ENCODE measurements at regions of chr6 and their contacts with region 1.

Region 1: DNA sequence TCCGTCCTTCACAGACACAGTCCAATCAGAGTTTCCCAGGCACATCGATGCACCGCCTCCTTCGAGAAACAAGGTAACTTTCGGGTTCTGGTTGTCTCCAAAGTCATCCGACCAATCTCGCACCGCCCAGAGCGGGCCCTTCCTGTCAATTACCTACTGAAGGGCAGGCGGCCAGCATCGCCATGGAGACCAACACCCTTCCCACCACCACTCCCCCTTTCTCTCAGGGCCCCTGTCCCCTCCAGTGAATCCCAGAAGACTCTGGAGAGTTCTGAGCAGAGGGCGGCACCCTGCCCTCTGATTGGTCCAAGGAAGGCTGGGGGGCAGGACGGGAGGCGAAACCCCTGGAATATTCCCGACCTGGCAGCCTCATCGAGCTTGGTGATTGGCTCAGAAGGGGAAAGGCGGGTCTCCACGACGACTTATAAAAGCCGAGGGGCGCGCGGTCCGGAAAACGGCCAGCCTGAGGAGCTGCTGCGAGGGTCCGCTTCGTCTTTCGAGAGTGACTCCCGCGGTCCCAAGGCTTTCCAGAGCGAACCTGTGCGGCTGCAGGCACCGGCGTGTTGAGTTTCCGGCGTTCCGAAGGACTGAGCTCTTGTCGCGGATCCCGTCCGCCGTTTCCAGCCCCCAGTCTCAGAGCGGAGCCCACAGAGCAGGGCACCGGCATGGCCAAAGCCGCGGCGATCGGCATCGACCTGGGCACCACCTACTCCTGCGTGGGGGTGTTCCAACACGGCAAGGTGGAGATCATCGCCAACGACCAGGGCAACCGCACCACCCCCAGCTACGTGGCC is at the start of gene HSPA1B:
- DNase-seq: peak; percentile 100
- ATAC-seq: peak; percentile 87
- H3K4me3 ChIP-seq: peak within 1 kb of the TSS; percentile 71 to 72
- H3K27ac ChIP-seq: peak within 1 kb of the TSS; percentile 94
- H3K4me1 ChIP-seq: peaks cover 47 to 71% of the 10 kb centered on the region in 2 experiments
- H3K27me3 ChIP-seq: no peaks in the 10 kb centered on the region
- CTCF ChIP-seq: no peak
- POLR2A ChIP-seq: peak; percentile 99
- RAD21 ChIP-seq: no peak
- total RNA-seq, gene HSPA1B: 214 TPM

Region 2: DNA sequence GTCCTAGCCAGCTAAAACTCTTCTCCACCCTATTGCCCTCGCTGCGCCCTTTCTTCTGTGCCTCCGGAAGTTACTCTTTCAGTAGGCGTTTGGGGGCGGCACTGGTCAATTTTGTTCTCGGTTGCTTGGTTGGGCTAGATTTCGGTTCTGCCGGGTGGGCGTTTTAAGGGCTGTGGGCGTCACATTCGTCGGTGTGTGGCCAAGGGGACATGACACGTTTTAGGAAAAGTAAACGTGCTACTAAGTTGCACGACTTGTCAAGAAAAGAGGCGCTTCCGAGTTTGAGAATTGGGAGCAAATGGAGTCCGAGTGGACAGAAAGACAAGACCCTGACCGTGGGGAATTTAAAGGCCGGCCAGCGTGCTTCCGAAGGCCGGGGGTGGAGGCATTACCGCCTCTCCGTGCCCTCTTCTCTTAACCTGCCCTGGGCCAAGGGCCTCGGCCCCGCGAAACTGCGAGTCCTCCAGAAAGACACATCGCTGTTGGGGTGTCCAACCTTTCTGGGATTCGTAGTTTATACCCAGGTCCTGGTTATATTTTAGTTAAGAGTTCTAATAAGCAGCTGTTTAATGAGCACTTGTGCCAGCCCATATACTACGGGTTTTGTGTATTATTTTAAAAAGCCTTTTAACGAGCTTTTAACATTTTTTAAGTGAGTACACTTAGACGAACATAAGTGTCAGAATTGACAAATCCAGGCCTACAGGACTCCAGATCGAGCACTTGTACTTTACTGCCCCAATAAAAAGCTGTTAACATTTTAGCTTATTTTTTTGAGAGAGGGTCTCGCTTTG is 174.4 kb before region 1 on chr6:
- CTCF ChIA-PET with region 1: no interaction called
- POLR2A ChIA-PET with region 1: interaction called, 10 read pairs
- RAD21 ChIA-PET with region 1: no interaction called
- intact Hi-C with region 1: no loop called
- DNase-seq: no peak
- ATAC-seq: peak; percentile 75
- H3K4me3 ChIP-seq: peak overlapping the region; percentile 55 to 66
- H3K27ac ChIP-seq: peak overlapping the region; percentile 89
- H3K4me1 ChIP-seq: peaks cover 7 to 21% of the 10 kb centered on the region in 2 experiments
- H3K27me3 ChIP-seq: no peaks in the 10 kb centered on the region
- CTCF ChIP-seq: no peak
- POLR2A ChIP-seq: peak; percentile 68
- RAD21 ChIP-seq: no peak

Region 3: GRCh38 chr6:31739639-31740396 is 87.7 kb before region 1 on chr6 and contains the start of gene MSH5:
- CTCF ChIA-PET with region 1: no interaction called
- POLR2A ChIA-PET with region 1: interaction called, 21 read pairs
- RAD21 ChIA-PET with region 1: interaction called in 1 of 2 experiments, 3 read pairs
- intact Hi-C with region 1: loop called (anchors 5 kb)
- DNase-seq: peak; percentile 99
- ATAC-seq: peak; percentile 86
- H3K4me3 ChIP-seq: peak within 1 kb of the TSS; percentile 86 to 92
- H3K27ac ChIP-seq: peak within 1 kb of the TSS; percentile 99
- H3K4me1 ChIP-seq: peaks cover 35 to 51% of the 10 kb centered on the region in 2 experiments
- H3K27me3 ChIP-seq: no peaks in the 10 kb centered on the region
- CTCF ChIP-seq: no peak
- POLR2A ChIP-seq: peak; percentile 39
- RAD21 ChIP-seq: no peak
- total RNA-seq, gene MSH5: 90.4 TPM

Region 4: GRCh38 chr6:31776989-31777666 is 50.4 kb before region 1 on chr6 and contains the start of gene VWA7:
- CTCF ChIA-PET with region 1: interaction called, 11 read pairs
- POLR2A ChIA-PET with region 1: interaction called, 47 read pairs
- RAD21 ChIA-PET with region 1: interaction called in 1 of 2 experiments, 5 read pairs
- intact Hi-C with region 1: loop called (anchors 2 kb)
- DNase-seq: peak; percentile 84
- ATAC-seq: peak; percentile 79
- H3K4me3 ChIP-seq: peak within 1 kb of the TSS; percentile 40 to 56
- H3K27ac ChIP-seq: peak within 1 kb of the TSS; percentile 79
- H3K4me1 ChIP-seq: peaks cover 41 to 56% of the 10 kb centered on the region in 2 experiments
- H3K27me3 ChIP-seq: no peaks in the 10 kb centered on the region
- CTCF ChIP-seq: no peak
- POLR2A ChIP-seq: no peak
- RAD21 ChIP-seq: no peak
- total RNA-seq, gene VWA7: 14.6 TPM

Region 5: GRCh38 chr6:31806465-31807272 is 20.8 kb before region 1 on chr6 and contains the start of gene LSM2:
- CTCF ChIA-PET with region 1: interaction called, 5 read pairs
- POLR2A ChIA-PET with region 1: interaction called, 49 read pairs
- RAD21 ChIA-PET with region 1: interaction called, 3 to 4 read pairs
- intact Hi-C with region 1: loop called (anchors 1 kb)
- DNase-seq: peak; percentile 88
- ATAC-seq: peak; percentile 97
- H3K4me3 ChIP-seq: peak within 1 kb of the TSS; percentile 93 to 94
- H3K27ac ChIP-seq: peak within 1 kb of the TSS; percentile 85
- H3K4me1 ChIP-seq: peaks cover 13 to 16% of the 10 kb centered on the region in 2 experiments
- H3K27me3 ChIP-seq: no peaks in the 10 kb centered on the region
- CTCF ChIP-seq: 0 out of 6 replicates have a peak, but pooled peaks of 2 of the 3 experiments have one; percentile 10 to 23
- POLR2A ChIP-seq: peak; percentile 92
- RAD21 ChIP-seq: peak; percentile 28
- total RNA-seq, gene LSM2: 89.7 TPM

Region 6: DNA sequence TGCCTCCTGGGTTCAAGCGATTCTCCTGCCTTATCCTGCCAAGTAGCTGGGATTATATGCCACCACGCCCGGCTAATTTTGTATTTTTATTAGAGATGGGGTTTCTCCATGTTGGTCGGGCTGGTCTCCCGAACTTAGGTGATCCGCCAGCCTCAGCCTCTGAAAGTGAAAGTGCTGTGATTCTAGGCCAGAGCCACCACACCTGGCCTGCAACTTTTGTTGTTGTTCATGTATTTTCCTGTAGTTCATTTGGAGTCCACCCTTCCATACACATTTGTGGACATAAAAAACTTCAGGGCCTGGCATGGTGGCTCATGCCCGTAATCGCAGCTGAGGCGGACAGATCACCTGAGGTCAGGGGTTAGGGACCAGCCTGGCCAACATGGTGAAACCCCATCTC is 14.6 kb after region 1 on chr6:
- CTCF ChIA-PET with region 1: no interaction called
- POLR2A ChIA-PET with region 1: interaction called, 11 read pairs
- RAD21 ChIA-PET with region 1: no interaction called
- intact Hi-C with region 1: no loop called
- DNase-seq: no peak
- ATAC-seq: peak; percentile 4
- H3K4me3 ChIP-seq: no peak overlapping the region
- H3K27ac ChIP-seq: peak overlapping the region; percentile 25; the same call in 1 of the 2 replicates
- H3K4me1 ChIP-seq: peaks cover 5 to 24% of the 10 kb centered on the region in 2 experiments; a peak in 3 of 4 replicates
- H3K27me3 ChIP-seq: no peaks in the 10 kb centered on the region
- CTCF ChIP-seq: no peak
- POLR2A ChIP-seq: no peak
- RAD21 ChIP-seq: no peak

Region 7: DNA sequence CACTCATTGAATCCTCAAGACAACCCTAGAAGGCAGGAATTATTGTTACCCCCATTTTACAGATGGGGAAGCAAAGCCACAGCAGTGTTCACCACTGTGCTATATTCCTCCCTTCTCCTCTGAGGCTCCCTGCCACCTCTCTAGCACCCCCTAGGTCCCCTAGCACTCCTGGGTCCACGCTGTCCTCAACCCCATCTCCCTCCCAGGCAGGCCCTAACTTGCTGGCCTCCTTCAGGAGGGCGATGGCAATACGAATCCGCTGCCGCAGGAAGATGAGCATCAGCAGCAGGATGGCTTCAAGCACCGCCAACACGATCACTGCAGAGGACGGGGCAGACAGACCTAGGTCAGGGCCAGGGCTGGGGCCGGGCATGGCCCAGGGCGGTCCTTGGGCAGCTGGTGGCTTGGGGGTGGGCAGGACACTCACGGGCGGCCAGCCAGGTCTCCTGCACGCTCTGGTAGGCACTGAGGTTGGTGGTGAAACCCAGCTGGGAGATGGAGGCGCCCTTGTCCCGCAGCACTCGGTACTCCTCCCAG is 43.0 kb after region 1 on chr6:
- CTCF ChIA-PET with region 1: no interaction called
- POLR2A ChIA-PET with region 1: no interaction called
- RAD21 ChIA-PET with region 1: no interaction called
- intact Hi-C with region 1: no loop called
- DNase-seq: no peak
- ATAC-seq: peak; percentile 82
- H3K4me3 ChIP-seq: no peak overlapping the region
- H3K27ac ChIP-seq: no peak overlapping the region
- H3K4me1 ChIP-seq: peaks cover 6 to 9% of the 10 kb centered on the region in 2 experiments; a peak in 3 of 4 replicates
- H3K27me3 ChIP-seq: no peaks in the 10 kb centered on the region
- CTCF ChIP-seq: peak in 2 of 3 experiments; percentile 37 to 42; a peak in 3 of 6 replicates
- POLR2A ChIP-seq: no peak
- RAD21 ChIP-seq: no peak

Region 8: GRCh38 chr6:32355018-32355417 is 527.5 kb after region 1 on chr6:
- CTCF ChIA-PET with region 1: no interaction called
- POLR2A ChIA-PET with region 1: no interaction called
- RAD21 ChIA-PET with region 1: no interaction called
- intact Hi-C with region 1: no loop called
- DNase-seq: no peak
- ATAC-seq: no peak
- H3K4me3 ChIP-seq: no peak overlapping the region
- H3K27ac ChIP-seq: no peak overlapping the region
- H3K4me1 ChIP-seq: no peaks in the 10 kb centered on the region
- H3K27me3 ChIP-seq: no peaks in the 10 kb centered on the region
- CTCF ChIP-seq: no peak
- POLR2A ChIP-seq: no peak
- RAD21 ChIP-seq: no peak

Measured in HCT116 (cell line).